Right cardiac atrium (tissue), 5 donors: ENCODE measurements at regions of chr4 and their contacts with region 1.

Region 1: GRCh38 chr4:151169223-151169622 is 69.8 kb downstream of the RPS3A start:
- DNase-seq: peak; percentile 76 to 86 (median 79)
- ATAC-seq: peak; percentile 90 to 94
- H3K4me3 ChIP-seq: no peak overlapping the region
- H3K27ac ChIP-seq: no peak overlapping the region
- H3K4me1 ChIP-seq: peaks cover 6% of the 10 kb centered on the region
- H3K27me3 ChIP-seq: no peaks in the 10 kb centered on the region

Region 2: DNA sequence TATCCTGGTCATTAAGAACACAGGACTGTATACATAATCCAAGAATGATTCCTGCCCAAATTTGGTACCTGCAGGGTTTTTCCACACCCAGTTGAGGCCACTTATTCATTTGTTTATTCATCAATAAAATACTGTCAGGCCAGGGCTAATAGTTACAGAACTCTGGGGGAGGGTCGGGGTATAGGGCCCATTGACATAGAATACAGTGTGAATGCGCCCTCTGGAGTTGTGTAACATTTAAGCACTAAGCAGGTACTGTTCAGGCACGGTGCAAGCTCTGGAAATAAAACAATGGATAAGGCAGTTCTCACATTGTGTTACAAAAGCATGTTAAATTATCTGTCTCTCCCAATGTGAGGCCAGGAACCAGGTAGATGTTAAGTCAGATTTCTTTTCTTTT is 123.3 kb before region 1 on chr4:
- intact Hi-C with region 1: no loop called
- DNase-seq: no peak
- ATAC-seq: no peak
- H3K4me3 ChIP-seq: no peak overlapping the region
- H3K27ac ChIP-seq: no peak overlapping the region
- H3K4me1 ChIP-seq: no peaks in the 10 kb centered on the region
- H3K27me3 ChIP-seq: no peaks in the 10 kb centered on the region

Region 3: DNA sequence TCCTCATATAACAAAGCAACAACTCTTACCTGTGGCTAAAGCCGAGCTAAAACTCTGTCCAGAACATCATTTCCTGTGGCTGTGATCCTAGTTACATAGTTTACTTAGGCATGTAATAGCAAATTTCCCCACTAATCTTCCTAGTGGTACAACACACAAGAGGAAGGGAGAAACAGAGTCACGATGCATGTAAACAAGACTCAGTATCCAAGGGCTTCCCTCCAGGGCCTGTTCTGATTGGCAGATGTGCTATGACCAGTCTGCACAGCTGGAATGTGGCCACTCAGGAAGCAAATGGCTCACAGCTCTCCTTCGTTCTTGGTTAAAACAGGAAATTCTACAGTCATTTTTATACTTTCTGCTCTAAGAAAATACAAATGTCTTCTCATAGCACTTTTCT is 58.5 kb after region 1 on chr4:
- intact Hi-C with region 1: loop called in 2 of 4 experiments (anchors 10 kb)
- DNase-seq: peak; percentile 67 to 88 (median 77)
- ATAC-seq: peak; percentile 88 to 92
- H3K4me3 ChIP-seq: peak overlapping the region; percentile 78
- H3K27ac ChIP-seq: peak overlapping the region; percentile 85
- H3K4me1 ChIP-seq: peaks cover 2% of the 10 kb centered on the region
- H3K27me3 ChIP-seq: no peaks in the 10 kb centered on the region